Mammary epithelial cell (primary cell): ENCODE measurements at regions of chr3 and their contacts with region 1.

Region 1: DNA sequence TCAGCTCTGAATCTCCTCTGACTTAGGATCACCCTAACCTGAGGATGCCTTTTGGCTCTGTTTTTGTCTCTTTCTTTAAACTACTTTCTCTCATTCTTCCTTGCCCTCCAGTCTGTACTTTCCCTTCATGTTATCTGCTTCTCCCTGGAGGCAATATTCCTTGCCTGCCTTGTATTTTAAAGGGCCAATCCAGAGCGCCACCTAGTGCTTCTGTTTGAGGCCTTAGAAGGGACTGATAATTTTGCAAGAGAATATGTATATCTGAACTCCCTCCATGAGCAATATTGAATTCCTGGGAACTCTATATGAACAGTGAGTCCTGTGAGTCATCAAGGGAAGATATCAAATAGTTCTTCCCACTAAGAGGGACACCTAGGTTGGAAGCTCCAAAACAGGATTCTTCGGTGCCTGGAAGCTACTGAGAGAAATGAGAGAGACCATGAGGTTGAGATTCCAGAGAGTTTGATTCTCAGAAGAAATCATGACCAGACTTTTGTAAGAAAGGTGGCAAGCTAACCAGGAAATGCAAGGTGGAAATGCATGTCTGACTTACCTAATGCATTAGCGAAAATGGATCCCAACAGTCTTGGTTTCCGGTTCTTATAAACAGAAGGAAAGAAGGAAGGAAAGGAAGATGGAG is 203.8 kb upstream of the CD96 start:
- DNase-seq: peak; percentile 66
- H3K4me3 ChIP-seq: no peak overlapping the region
- H3K27ac ChIP-seq: no peak overlapping the region
- H3K4me1 ChIP-seq: peaks cover 12% of the 10 kb centered on the region
- H3K27me3 ChIP-seq: no peaks in the 10 kb centered on the region
- CTCF ChIP-seq: peak; percentile 75 to 90

Region 2: GRCh38 chr3:109532257-109533216 is 1805.6 kb before region 1 on chr3:
- CTCF ChIA-PET with region 1: no interaction called
- dilution Hi-C with region 1: no loop called
- in situ Hi-C with region 1: no loop called
- intact Hi-C with region 1: loop called (anchors 5 kb)
- DNase-seq: peak; percentile 69
- H3K4me3 ChIP-seq: no peak overlapping the region
- H3K27ac ChIP-seq: no peak overlapping the region
- H3K4me1 ChIP-seq: no peaks in the 10 kb centered on the region
- H3K27me3 ChIP-seq: no peaks in the 10 kb centered on the region
- CTCF ChIP-seq: peak; percentile 18 to 60

Region 3: GRCh38 chr3:110384601-110385000 is 953.6 kb before region 1 on chr3:
- CTCF ChIA-PET with region 1: no interaction called
- dilution Hi-C with region 1: no loop called
- in situ Hi-C with region 1: no loop called
- intact Hi-C with region 1: no loop called
- DNase-seq: no peak
- H3K4me3 ChIP-seq: no peak overlapping the region
- H3K27ac ChIP-seq: no peak overlapping the region
- H3K4me1 ChIP-seq: no peaks in the 10 kb centered on the region
- H3K27me3 ChIP-seq: no peaks in the 10 kb centered on the region
- CTCF ChIP-seq: no peak

Region 4: DNA sequence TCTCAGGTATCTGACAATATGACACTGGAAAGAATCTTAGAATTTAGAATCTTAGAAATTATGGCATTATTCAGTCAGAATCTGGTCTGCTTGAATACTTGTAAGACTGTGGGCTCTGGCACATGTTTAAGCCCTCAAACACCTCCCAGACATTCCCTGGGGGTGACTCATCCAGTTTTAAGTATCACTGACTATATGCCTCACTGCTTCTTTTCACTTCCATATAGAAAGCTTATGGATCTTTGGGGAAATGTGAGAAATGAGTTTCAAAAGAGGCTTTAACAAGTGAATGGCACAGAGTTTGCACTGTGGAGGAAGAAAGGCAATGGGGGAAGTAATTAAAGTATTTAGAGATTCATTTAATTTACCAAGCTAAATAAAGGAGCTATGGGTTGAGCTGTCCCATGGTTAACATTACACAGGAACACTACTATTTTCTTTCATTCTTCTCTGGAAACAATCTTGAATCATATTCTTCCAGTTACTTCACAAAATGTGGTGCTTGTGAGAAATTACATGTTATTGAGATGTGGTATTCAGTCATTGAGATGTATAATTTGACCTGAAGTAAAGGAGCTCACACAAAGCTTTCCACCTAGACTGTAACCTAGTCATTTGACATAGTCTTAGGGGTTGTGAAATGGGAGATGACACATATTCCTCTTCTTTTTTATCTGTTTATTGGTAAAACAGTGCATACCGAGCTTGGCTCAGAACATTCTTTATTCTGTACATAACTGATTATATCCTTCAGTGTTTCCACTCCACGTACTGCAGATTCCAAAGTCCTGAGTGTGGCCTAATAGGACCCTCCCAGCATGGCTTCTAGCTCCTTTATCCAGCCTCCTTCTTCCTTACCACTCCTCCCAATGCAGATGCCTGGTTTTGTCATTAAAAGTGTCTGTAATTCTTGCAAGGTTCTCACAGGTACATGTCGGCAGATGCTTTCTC is 811.1 kb before region 1 on chr3:
- CTCF ChIA-PET with region 1: no interaction called
- dilution Hi-C with region 1: no loop called
- in situ Hi-C with region 1: no loop called
- intact Hi-C with region 1: loop called (anchors 10 kb)
- DNase-seq: peak; percentile 82
- H3K4me3 ChIP-seq: no peak overlapping the region
- H3K27ac ChIP-seq: peak overlapping the region; percentile 91
- H3K4me1 ChIP-seq: peaks cover 19% of the 10 kb centered on the region
- H3K27me3 ChIP-seq: no peaks in the 10 kb centered on the region
- CTCF ChIP-seq: no peak

Region 5: DNA sequence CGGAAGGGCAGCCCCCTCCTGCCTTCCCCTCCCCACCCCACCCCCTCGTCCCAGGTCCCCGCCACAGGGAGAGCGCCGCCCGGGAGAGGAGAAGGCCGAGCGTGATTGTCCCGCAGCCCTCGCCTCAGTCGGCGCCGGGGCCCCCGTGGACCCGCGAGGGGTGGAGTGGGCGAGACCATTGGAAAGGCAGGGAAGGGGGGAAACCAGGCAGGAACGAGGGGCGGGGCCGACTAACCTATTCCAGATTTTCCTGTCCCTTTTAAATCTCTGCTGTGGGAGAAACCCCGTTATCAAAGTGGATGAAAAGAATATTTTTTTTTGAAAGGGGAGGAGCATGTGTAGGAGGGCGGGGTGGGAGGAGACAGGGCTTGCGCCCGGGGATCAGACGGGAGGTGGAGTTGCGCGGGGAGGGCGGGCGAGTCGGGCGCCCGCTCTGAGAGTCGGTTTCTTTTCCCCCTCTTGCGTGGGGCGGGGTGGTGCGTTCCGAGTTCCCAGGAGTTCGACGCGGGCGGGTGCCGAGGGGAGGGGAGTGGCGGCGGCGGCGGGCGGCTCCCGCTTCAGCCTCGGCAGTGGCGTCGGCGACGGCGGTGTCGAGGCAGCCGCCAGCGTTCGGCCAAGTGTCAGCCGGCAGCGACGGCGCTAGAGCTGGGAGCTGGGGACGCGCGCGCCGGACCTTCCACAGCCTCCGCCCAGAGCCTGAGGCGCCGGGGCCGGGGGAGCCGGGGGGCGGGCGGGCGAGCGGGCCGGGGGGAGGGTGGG is 266.7 kb before region 1 on chr3 and contains the start of gene NECTIN3:
- CTCF ChIA-PET with region 1: no interaction called
- dilution Hi-C with region 1: no loop called
- in situ Hi-C with region 1: no loop called
- intact Hi-C with region 1: loop called (anchors 5 kb)
- DNase-seq: peak; percentile 94
- H3K4me3 ChIP-seq: peak within 1 kb of the TSS; percentile 72 to 94 (median 75)
- H3K27ac ChIP-seq: peak within 1 kb of the TSS; percentile 29
- H3K4me1 ChIP-seq: peaks cover 9% of the 10 kb centered on the region
- H3K27me3 ChIP-seq: peaks cover 7% of the 10 kb centered on the region
- CTCF ChIP-seq: no peak
- total RNA-seq, gene NECTIN3: 11.6 to 12.5 TPM

Region 6: DNA sequence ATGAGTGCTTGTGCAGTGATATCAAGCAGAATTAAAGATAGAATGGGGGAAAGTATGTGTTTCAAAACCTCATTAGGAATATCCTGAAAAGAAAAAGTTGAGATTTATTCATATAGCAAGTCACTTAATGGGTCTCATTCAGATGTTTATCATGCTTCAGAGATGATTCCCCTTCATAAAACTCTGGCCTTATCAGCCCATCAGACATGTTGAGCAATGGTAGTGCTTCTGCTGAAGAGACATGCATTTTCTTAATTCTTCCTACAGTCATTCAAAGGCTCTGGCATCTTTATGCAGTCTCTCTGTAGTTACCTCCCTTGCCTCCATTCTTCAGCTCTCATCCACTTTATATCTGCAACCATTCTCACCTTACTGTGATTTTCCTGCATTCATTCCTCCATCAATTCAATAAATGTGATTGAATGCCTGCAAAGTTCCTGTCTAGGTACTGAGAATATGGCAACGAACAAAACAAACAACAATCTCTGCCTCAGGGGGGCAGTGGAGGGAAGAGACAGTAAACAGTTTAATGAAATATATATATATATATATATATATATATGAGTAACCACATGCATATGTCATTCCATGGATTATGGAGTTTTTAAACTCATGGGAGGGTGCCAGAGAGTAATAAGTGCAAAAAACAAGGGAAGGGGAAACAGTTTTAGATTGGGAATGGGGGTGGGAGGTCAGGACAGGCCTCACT is 128.0 kb before region 1 on chr3:
- CTCF ChIA-PET with region 1: no interaction called
- dilution Hi-C with region 1: no loop called
- in situ Hi-C with region 1: no loop called
- intact Hi-C with region 1: loop called (anchors 2 kb)
- DNase-seq: peak; percentile 28
- H3K4me3 ChIP-seq: no peak overlapping the region
- H3K27ac ChIP-seq: no peak overlapping the region
- H3K4me1 ChIP-seq: no peaks in the 10 kb centered on the region
- H3K27me3 ChIP-seq: no peaks in the 10 kb centered on the region
- CTCF ChIP-seq: peak in 1 of 2 donors; percentile 31

Region 7: GRCh38 chr3:111299068-111299672 is 39.0 kb before region 1 on chr3:
- CTCF ChIA-PET with region 1: no interaction called
- dilution Hi-C with region 1: no loop called
- in situ Hi-C with region 1: no loop called
- intact Hi-C with region 1: loop called (anchors 2 kb)
- DNase-seq: peak; percentile 69
- H3K4me3 ChIP-seq: no peak overlapping the region
- H3K27ac ChIP-seq: no peak overlapping the region
- H3K4me1 ChIP-seq: no peaks in the 10 kb centered on the region
- H3K27me3 ChIP-seq: no peaks in the 10 kb centered on the region
- CTCF ChIP-seq: peak in 1 of 2 donors; percentile 28

Region 8: DNA sequence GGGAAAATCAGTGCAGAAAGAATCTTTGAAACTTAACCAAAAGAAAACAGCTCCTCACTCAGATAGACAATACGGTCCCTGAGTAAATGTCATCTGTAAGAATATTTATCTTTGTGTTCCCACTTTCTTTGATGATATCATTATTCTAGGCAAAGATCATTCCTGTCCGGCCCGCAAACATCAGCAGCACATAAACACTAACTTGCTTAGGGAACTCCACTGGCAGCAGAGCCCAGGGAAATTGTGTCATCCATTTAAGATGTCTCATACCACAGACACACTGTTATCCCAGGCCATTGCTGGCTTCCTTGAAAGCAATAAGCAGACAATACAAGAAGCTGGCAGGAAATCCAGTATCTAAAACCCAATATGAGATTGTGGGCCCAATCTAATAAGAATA is 183.7 kb after region 1 on chr3:
- CTCF ChIA-PET with region 1: no interaction called
- dilution Hi-C with region 1: no loop called
- in situ Hi-C with region 1: no loop called
- intact Hi-C with region 1: no loop called
- DNase-seq: no peak
- H3K4me3 ChIP-seq: no peak overlapping the region
- H3K27ac ChIP-seq: no peak overlapping the region
- H3K4me1 ChIP-seq: no peaks in the 10 kb centered on the region
- H3K27me3 ChIP-seq: no peaks in the 10 kb centered on the region
- CTCF ChIP-seq: no peak